ENCODE measurements at regions of chrX and their contacts with region 1.

Region 1: GRCh38 chrX:9464435-9465371 is at the start of gene TBL1X:
- DNase-seq: no peak
- H3K4me3 ChIP-seq: peak within 1 kb of the TSS in 1 of 3 experiments; percentile 32
- H3K27ac ChIP-seq: no peak within 1 kb of the TSS
- H3K4me1 ChIP-seq: no peaks in the 10 kb centered on the region
- H3K27me3 ChIP-seq: peaks cover 11% of the 10 kb centered on the region
- CTCF ChIP-seq: no peak
- total RNA-seq, gene TBL1X: 5.5 to 7.2 TPM

Region 2: GRCh38 chrX:9566150-9566621 is 101.5 kb after region 1 on chrX:
- CTCF ChIA-PET with region 1: no interaction called
- dilution Hi-C with region 1: no loop called
- in situ Hi-C with region 1: no loop called
- intact Hi-C with region 1: loop called (anchors 10 kb)
- DNase-seq: peak; percentile 54
- H3K4me3 ChIP-seq: no peak overlapping the region
- H3K27ac ChIP-seq: no peak overlapping the region
- H3K4me1 ChIP-seq: no peaks in the 10 kb centered on the region
- H3K27me3 ChIP-seq: no peaks in the 10 kb centered on the region
- CTCF ChIP-seq: peak in 1 of 2 donors; percentile 7

Region 3: DNA sequence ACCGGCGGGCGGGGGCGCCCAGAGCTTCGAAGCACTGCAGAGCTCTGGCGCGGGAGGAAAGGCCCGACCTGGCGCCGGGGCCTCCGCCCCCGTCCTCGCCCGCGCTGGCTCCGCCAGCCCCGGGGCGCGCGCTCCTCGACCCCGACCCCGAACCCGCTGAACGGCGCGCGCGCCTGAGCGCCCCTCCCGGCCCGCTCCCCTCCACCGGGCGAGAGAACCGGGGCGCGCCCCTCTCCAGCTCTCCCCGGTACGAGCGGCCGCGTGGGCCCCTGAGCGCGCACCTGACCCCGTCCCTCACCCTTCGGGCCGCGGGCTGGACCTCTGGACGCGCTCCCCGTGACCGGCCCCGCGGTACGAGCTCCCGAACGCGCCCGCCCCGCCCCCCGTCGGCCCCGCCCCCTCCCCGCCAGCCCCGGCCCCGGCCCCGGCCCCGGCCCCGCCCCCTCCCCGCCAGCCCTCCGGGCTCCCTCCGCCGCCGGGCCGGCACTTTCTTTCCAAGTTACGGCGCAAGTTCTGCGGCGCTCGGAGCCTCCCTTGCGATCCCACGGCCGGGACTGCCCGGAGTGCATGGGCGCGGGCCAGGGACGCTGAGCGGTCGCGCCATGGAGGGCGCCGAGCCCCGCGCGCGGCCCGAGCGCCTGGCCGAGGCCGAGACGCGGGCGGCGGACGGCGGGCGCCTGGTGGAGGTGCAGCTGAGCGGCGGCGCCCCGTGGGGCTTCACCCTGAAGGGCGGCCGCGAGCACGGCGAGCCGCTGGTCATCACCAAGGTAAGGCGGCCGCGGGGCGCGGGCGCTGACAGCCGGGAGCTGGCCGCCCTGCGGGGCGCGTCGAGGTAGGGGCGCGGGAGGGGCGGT is 321.5 kb after region 1 on chrX and contains the start of gene SHROOM2:
- CTCF ChIA-PET with region 1: no interaction called
- dilution Hi-C with region 1: no loop called
- in situ Hi-C with region 1: no loop called
- intact Hi-C with region 1: loop called (anchors 10 kb)
- DNase-seq: no peak
- H3K4me3 ChIP-seq: peak within 1 kb of the TSS in 2 of 3 experiments; percentile 30 to 41
- H3K27ac ChIP-seq: no peak within 1 kb of the TSS
- H3K4me1 ChIP-seq: peaks cover 4% of the 10 kb centered on the region
- H3K27me3 ChIP-seq: peaks cover 13% of the 10 kb centered on the region
- CTCF ChIP-seq: no peak
- total RNA-seq, gene SHROOM2: 9.7 to 12.0 TPM

Region 4: DNA sequence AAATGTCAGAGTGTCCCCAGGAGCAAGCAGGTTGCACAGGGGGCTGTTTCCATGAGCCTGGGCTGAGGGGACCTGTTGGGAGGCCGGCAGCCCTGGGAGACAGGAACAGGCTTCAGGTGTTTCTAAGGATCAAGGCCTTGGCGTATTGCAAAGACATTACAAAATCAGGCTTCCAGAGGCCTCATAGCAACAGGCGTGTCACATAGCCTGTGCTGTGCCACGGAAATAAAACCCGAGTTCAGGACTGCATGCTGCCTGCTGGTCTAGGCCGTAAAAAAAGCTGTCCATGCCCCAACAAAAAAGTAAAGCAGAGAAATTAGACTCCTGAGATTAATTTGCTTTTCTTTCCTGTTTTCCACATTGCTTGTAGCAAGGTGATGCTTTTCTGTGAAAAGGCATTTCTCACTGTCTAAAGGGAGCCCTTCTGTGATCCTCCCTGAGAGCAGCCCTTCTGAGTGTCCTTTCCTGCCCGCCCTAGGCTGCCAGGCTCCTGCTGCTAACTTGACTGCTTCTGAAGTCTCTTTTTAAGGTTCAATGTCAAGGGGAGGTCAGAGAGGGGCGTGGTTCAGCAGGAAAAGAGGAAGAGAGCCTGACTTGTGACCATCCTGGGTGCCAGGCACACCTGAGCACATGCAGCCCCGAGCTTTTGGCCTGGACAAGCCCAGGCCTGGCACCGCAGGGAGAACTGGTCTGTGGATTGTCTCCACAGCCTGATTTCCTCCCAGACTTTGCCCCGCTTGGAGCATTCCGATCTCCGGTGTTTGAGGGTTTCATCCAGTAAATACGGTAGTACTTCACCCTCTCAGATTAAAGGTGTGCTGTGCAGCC is 342.9 kb after region 1 on chrX:
- CTCF ChIA-PET with region 1: no interaction called
- dilution Hi-C with region 1: no loop called
- in situ Hi-C with region 1: no loop called
- intact Hi-C with region 1: loop called (anchors 1 kb)
- DNase-seq: peak; percentile 33
- H3K4me3 ChIP-seq: no peak overlapping the region
- H3K27ac ChIP-seq: no peak overlapping the region
- H3K4me1 ChIP-seq: peaks cover 7% of the 10 kb centered on the region
- H3K27me3 ChIP-seq: no peaks in the 10 kb centered on the region
- CTCF ChIP-seq: no peak